ENCODE measurements at regions of chr15 and their contacts with region 1.

Region 1: DNA sequence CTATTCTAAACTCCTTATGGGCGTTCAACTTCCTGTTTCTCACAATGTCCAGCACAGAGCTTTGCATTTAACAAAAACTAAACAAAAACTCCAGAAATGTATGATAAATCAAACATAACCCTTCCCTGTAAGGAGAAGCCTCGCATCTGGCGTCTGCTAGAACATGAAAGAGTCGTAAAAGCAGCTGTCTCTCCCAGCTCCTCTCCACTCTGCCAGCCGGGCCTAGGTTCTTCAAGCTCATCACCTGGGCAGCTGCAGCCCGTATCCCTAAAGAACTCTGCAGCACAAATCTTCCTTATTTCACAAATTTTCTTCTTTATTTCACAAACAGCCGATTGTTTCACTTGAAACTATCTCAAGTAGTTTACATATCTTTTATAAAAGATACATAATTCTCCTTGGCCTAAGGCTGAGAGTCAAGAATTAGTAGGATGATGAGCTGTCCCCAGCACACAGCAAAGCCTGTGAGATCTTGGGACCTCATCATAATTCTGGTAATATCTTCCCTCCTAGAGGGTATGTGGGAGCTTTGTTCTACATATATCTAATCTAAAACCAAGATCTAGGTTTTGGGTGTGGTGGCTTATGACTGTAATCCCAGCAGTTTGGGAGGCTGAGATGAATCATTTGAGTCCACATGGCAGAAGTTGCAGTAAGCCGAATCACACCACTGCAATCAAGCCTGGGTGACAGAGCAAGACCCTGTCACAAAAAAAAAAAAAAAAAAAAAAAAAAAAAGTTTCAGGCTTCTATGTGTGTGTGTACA is 35.3 kb downstream of the ANXA2 start:
- DNase-seq: peak; percentile 3 to 49 (median 22)
- H3K4me3 ChIP-seq: no peak overlapping the region
- H3K4me3 Mint-ChIP-seq: peak overlapping the region in 1 of 8 donors; percentile 49
- H3K27ac ChIP-seq: no peak overlapping the region
- H3K27ac Mint-ChIP-seq: peak overlapping the region; percentile 17 to 87 (median 81)
- H3K4me1 ChIP-seq: peaks cover 25% of the 10 kb centered on the region
- H3K4me1 Mint-ChIP-seq: peaks cover 21 to 39% (median 29%) of the 10 kb centered on the region in 4 donors
- H3K27me3 ChIP-seq: no peaks in the 10 kb centered on the region
- H3K27me3 Mint-ChIP-seq: no peaks in the 10 kb centered on the region

Region 2: DNA sequence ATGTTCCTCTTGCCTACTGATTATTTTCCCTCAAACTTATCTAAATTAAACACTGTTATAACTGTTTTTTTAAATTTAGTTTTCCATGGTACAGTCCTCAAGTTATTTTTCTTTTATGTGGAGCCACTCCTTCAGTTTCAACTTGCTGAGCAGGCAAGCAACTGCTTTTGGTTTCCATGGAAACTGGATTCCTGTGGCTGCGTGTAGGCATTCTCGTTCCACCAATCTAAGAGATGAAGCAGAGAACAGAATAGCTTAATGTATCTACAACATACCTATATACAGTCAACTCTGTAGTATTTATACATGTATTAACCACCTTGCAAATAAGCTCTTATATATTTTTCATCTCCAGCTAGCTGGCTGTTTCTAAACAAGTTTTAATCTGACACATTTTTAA is 61.0 kb after region 1 on chr15:
- CTCF ChIA-PET with region 1: interaction called, 7 read pairs
- POLR2A ChIA-PET with region 1: no interaction called
- intact Hi-C with region 1: loop called (anchors 5 kb)
- DNase-seq: no peak
- H3K4me3 ChIP-seq: no peak overlapping the region
- H3K4me3 Mint-ChIP-seq: no peak overlapping the region
- H3K27ac ChIP-seq: no peak overlapping the region
- H3K27ac Mint-ChIP-seq: peak overlapping the region in 4 of 7 donors; percentile 23 to 82 (median 48)
- H3K4me1 ChIP-seq: no peaks in the 10 kb centered on the region
- H3K4me1 Mint-ChIP-seq: peaks cover 0 to 5% (median 4%) of the 10 kb centered on the region in 4 donors
- H3K27me3 ChIP-seq: no peaks in the 10 kb centered on the region
- H3K27me3 Mint-ChIP-seq: no peaks in the 10 kb centered on the region

Region 3: GRCh38 chr15:60444289-60444912 is 81.9 kb after region 1 on chr15:
- CTCF ChIA-PET with region 1: interaction called, 33 read pairs
- POLR2A ChIA-PET with region 1: no interaction called
- intact Hi-C with region 1: loop called (anchors 1 kb)
- DNase-seq: peak in 2 of 5 donors; percentile 1 to 3
- H3K4me3 ChIP-seq: no peak overlapping the region
- H3K4me3 Mint-ChIP-seq: no peak overlapping the region
- H3K27ac ChIP-seq: no peak overlapping the region
- H3K27ac Mint-ChIP-seq: no peak overlapping the region
- H3K4me1 ChIP-seq: no peaks in the 10 kb centered on the region
- H3K4me1 Mint-ChIP-seq: peaks cover 0 to 4% (median 0%) of the 10 kb centered on the region in 4 donors
- H3K27me3 ChIP-seq: no peaks in the 10 kb centered on the region
- H3K27me3 Mint-ChIP-seq: no peaks in the 10 kb centered on the region

Region 4: DNA sequence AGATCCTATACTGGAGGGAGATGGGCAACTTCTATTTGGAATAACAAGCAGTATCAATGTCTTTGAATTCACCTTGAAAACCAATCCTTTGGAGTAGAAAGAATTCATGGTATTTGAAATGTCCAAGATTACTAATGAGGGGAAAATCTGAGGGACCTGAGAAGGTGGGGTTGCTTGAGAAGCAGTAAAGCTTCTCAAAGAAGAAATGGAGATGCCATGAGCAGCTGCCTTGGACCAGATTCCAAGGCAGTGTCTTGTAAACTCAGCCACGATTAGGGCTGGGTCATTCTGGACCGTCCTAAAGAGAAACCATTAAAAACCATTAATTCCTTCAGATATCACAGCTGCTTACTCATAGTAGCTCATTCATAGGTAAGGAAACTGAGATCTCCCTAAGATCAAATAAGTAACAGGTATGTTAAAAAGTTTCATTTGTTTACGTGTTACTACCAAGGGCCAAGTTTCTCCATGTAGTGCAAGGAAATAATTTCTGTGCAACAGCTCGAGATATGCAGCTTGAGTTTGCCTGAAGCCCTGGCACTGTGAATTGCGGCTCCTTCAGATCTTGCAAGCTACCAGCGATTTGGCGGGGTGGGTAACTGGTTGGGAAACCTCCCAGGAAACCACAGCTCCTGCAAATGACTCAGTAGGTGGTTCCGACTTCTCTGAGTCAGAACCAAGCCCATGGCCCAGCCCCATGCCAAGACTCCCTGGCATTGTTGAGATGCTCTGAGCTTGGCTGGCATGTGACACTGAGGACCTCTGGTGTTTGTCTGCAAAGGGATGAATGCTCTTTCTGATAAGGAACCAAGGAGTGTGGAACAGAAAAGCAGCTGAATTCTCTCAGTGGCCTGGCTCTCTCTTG is 569.8 kb after region 1 on chr15:
- CTCF ChIA-PET with region 1: interaction called, 18 read pairs
- POLR2A ChIA-PET with region 1: no interaction called
- intact Hi-C with region 1: loop called (anchors 1 kb)
- DNase-seq: peak; percentile 52 to 86 (median 61)
- H3K4me3 ChIP-seq: no peak overlapping the region
- H3K4me3 Mint-ChIP-seq: peak overlapping the region in 6 of 8 donors; percentile 5 to 65 (median 31)
- H3K27ac ChIP-seq: no peak overlapping the region
- H3K27ac Mint-ChIP-seq: peak overlapping the region in 4 of 7 donors; percentile 8 to 57 (median 55)
- H3K4me1 ChIP-seq: peaks cover 14% of the 10 kb centered on the region
- H3K4me1 Mint-ChIP-seq: peaks cover 9 to 25% (median 14%) of the 10 kb centered on the region in 4 donors
- H3K27me3 ChIP-seq: no peaks in the 10 kb centered on the region
- H3K27me3 Mint-ChIP-seq: no peaks in the 10 kb centered on the region